ENCODE measurements at regions of chr4 and their contacts with region 1.

Region 1: GRCh38 chr4:83503974-83504373 is 19.1 kb upstream of the ABRAXAS1 start:
- DNase-seq: peak; percentile 35
- H3K4me3 Mint-ChIP-seq: no peak overlapping the region
- H3K27ac Mint-ChIP-seq: no peak overlapping the region
- H3K4me1 Mint-ChIP-seq: peaks cover 14% of the 10 kb centered on the region
- H3K27me3 Mint-ChIP-seq: no peaks in the 10 kb centered on the region

Region 2: GRCh38 chr4:83490876-83491450 is 13.0 kb before region 1 on chr4:
- CTCF ChIA-PET with region 1: interaction called, 11 read pairs
- POLR2A ChIA-PET with region 1: interaction called, 14 read pairs
- DNase-seq: no peak
- H3K4me3 Mint-ChIP-seq: no peak overlapping the region
- H3K27ac Mint-ChIP-seq: no peak overlapping the region
- H3K4me1 Mint-ChIP-seq: peaks cover 4% of the 10 kb centered on the region
- H3K27me3 Mint-ChIP-seq: peaks cover 2% of the 10 kb centered on the region

Region 3: DNA sequence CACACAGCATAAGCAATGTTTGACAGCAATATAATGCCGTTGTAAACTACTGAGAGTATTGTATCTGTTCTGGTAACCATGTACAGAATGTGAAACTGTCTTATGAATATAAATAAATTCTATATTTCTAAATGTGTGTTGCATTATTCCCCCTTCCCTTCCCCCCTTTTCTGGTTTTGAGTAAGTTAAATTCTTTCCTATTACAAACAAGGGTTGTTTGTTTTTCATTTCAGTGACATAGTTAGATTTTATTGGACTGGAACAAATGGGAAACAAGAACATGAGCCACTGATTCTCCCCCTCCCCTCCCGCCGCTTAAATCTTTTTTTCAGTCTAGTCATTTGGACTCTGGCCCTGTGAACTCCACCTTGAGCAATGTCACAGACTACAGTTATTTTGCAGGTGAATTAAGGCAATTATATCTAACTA is 101.8 kb after region 1 on chr4:
- CTCF ChIA-PET with region 1: no interaction called
- POLR2A ChIA-PET with region 1: no interaction called
- DNase-seq: no peak
- H3K4me3 Mint-ChIP-seq: no peak overlapping the region
- H3K27ac Mint-ChIP-seq: no peak overlapping the region
- H3K4me1 Mint-ChIP-seq: no peaks in the 10 kb centered on the region
- H3K27me3 Mint-ChIP-seq: peaks cover 13% of the 10 kb centered on the region